ENCODE measurements at regions of chr1 and their contacts with region 1.

Region 1: DNA sequence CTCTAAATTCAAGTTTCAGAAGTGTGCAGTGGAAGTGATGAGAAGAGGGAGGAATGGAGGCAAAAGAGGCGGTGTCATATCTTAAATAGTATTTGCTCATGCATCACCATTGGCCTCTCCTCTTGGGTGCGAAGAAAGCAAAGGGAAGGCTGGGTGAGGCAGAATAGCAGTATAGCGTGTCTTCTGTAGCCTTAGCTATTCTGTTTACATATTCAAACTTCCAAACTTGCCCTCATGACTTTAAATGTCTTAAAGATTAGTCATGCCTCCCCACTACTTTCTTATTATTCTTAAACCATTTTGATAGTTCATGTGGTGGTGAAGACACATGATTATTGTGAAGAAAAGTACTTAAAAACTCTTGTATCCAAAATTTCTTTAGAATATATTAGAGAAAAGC is 104.6 kb upstream of the TENT5C start:
- DNase-seq: no peak
- H3K4me3 ChIP-seq: no peak overlapping the region
- H3K27ac ChIP-seq: no peak overlapping the region
- H3K4me1 ChIP-seq: no peaks in the 10 kb centered on the region
- H3K27me3 ChIP-seq: no peaks in the 10 kb centered on the region
- CTCF ChIP-seq: no peak

Region 2: DNA sequence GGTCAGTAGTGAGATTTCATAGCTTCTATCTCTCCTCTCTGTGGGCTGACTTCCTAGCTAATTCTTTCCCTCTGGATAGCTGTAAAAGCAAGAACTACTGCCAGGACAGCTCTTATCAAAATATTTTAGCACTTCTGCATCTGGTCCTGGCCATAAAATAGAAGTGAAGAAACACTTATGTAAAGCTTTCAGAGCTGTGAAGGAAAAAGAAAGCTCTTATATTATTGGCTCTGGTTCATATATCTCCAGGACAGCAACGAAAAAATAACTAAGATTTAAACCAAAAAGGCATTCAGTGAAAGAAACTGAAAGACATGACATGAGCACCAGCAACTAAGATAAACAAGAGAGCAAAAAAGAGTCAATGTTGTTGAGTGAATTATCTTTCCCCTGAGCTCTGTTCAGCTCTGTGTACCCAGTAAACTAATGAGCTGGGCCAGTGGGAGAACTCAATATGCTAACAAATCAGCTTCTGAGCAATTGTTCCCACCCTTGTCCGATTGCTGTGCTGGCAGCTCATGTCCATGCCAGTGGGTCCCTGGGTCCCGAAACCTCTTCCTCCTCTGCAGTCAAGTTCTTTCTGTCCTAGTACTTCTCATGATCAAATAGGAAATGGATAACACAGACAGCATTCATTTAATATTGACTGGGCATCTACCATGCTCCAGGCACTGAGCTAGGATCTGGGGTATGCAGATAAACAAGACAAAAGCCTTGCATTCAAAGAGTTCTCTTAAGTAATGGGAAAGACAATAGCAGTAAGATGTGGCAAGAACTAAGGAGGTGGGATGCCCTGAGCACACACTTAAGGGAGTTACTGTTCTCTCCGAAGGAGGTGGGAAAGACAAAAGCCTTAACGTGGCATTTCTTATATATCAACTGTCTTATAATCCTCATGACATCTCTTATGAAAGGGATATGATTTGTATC is 179.3 kb before region 1 on chr1:
- CTCF ChIA-PET with region 1: no interaction called
- POLR2A ChIA-PET with region 1: no interaction called
- intact Hi-C with region 1: loop called (anchors 10 kb)
- DNase-seq: no peak
- H3K4me3 ChIP-seq: no peak overlapping the region
- H3K27ac ChIP-seq: no peak overlapping the region
- H3K4me1 ChIP-seq: no peaks in the 10 kb centered on the region
- H3K27me3 ChIP-seq: peaks cover 26% of the 10 kb centered on the region
- CTCF ChIP-seq: no peak

Region 3: GRCh38 chr1:117473063-117473462 is 28.2 kb before region 1 on chr1:
- CTCF ChIA-PET with region 1: no interaction called
- POLR2A ChIA-PET with region 1: no interaction called
- intact Hi-C with region 1: no loop called
- DNase-seq: no peak
- H3K4me3 ChIP-seq: no peak overlapping the region
- H3K27ac ChIP-seq: no peak overlapping the region
- H3K4me1 ChIP-seq: no peaks in the 10 kb centered on the region
- H3K27me3 ChIP-seq: no peaks in the 10 kb centered on the region
- CTCF ChIP-seq: no peak

Measured in PC-9 (cell line).